ENCODE measurements at regions of chr5 and their contacts with region 1.

Region 1: GRCh38 chr5:32339198-32339597 is 26.5 kb upstream of the MTMR12 start:
- DNase-seq: no peak
- ATAC-seq: no peak
- H3K4me3 ChIP-seq: no peak overlapping the region
- H3K27ac ChIP-seq: no peak overlapping the region
- H3K4me1 ChIP-seq: no peaks in the 10 kb centered on the region
- H3K27me3 ChIP-seq: no peaks in the 10 kb centered on the region
- CTCF ChIP-seq: no peak

Region 2: GRCh38 chr5:32138839-32139493 is 200.2 kb before region 1 on chr5:
- intact Hi-C with region 1: loop called in 1 of 10 experiments (anchors 10 kb)
- DNase-seq: no peak
- ATAC-seq: no peak
- H3K4me3 ChIP-seq: no peak overlapping the region
- H3K27ac ChIP-seq: peak overlapping the region in 1 of 10 donors; percentile 3
- H3K4me1 ChIP-seq: peaks cover 3 to 15% (median 7%) of the 10 kb centered on the region in 9 donors
- H3K27me3 ChIP-seq: no peaks in the 10 kb centered on the region
- CTCF ChIP-seq: no peak

Region 3: DNA sequence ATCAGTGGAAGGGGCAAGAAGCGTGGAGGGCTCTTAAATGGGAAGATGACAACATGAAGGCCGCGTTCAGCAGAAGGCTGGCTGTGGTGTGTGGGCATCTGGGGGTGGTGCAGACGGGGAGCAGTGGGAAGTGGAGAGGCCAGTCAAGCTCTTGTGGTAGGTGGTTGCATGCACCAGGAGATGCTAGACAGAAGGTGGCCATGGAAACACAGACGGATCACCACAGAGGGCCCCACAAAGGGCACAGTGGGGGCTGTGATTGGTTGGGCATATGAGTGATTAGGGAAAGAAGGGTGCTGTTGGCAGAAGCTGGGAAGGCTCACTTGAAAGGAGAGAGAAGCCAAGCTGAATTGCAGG is 41.2 kb before region 1 on chr5:
- intact Hi-C with region 1: loop called in 1 of 10 experiments (anchors 2 kb)
- DNase-seq: no peak
- ATAC-seq: peak in 2 of 8 donors; percentile 24 to 28
- H3K4me3 ChIP-seq: no peak overlapping the region
- H3K27ac ChIP-seq: peak overlapping the region in 3 of 10 donors; percentile 5 to 31 (median 6)
- H3K4me1 ChIP-seq: peaks cover 0 to 61% (median 27%) of the 10 kb centered on the region in 9 donors
- H3K27me3 ChIP-seq: no peaks in the 10 kb centered on the region
- CTCF ChIP-seq: no peak

Measured in heart right ventricle (tissue), 16 donors.